Activated CD4-positive, alpha-beta T cell treated with anti-CD3 and anti-CD28 coated beads, Interleukin-2, amount 10 ng/mL, durations not matched to agents 7 days and 5 days (primary cell): ENCODE measurements at regions of chr11 and their contacts with region 1.

Region 1: GRCh38 chr11:35040221-35040942 is 98.6 kb upstream of the CD44 start:
- DNase-seq: peak; percentile 77
- H3K4me3 Mint-ChIP-seq: peak overlapping the region; percentile 77
- H3K27ac Mint-ChIP-seq: peak overlapping the region; percentile 95
- H3K4me1 Mint-ChIP-seq: peaks cover 58% of the 10 kb centered on the region
- H3K27me3 Mint-ChIP-seq: peaks cover 5% of the 10 kb centered on the region

Region 2: GRCh38 chr11:35050541-35050995 is 10.2 kb after region 1 on chr11:
- CTCF ChIA-PET with region 1: interaction called, 13 read pairs
- POLR2A ChIA-PET with region 1: no interaction called
- DNase-seq: no peak
- H3K4me3 Mint-ChIP-seq: peak overlapping the region; percentile 49
- H3K27ac Mint-ChIP-seq: peak overlapping the region; percentile 84
- H3K4me1 Mint-ChIP-seq: peaks cover 59% of the 10 kb centered on the region
- H3K27me3 Mint-ChIP-seq: no peaks in the 10 kb centered on the region

Region 3: GRCh38 chr11:35082321-35083182 is 42.2 kb after region 1 on chr11:
- CTCF ChIA-PET with region 1: no interaction called
- POLR2A ChIA-PET with region 1: no interaction called
- DNase-seq: peak; percentile 95
- H3K4me3 Mint-ChIP-seq: peak overlapping the region; percentile 75
- H3K27ac Mint-ChIP-seq: peak overlapping the region; percentile 96
- H3K4me1 Mint-ChIP-seq: peaks cover 91% of the 10 kb centered on the region
- H3K27me3 Mint-ChIP-seq: no peaks in the 10 kb centered on the region